ENCODE measurements at regions of chr2 and their contacts with region 1.

Region 1: DNA sequence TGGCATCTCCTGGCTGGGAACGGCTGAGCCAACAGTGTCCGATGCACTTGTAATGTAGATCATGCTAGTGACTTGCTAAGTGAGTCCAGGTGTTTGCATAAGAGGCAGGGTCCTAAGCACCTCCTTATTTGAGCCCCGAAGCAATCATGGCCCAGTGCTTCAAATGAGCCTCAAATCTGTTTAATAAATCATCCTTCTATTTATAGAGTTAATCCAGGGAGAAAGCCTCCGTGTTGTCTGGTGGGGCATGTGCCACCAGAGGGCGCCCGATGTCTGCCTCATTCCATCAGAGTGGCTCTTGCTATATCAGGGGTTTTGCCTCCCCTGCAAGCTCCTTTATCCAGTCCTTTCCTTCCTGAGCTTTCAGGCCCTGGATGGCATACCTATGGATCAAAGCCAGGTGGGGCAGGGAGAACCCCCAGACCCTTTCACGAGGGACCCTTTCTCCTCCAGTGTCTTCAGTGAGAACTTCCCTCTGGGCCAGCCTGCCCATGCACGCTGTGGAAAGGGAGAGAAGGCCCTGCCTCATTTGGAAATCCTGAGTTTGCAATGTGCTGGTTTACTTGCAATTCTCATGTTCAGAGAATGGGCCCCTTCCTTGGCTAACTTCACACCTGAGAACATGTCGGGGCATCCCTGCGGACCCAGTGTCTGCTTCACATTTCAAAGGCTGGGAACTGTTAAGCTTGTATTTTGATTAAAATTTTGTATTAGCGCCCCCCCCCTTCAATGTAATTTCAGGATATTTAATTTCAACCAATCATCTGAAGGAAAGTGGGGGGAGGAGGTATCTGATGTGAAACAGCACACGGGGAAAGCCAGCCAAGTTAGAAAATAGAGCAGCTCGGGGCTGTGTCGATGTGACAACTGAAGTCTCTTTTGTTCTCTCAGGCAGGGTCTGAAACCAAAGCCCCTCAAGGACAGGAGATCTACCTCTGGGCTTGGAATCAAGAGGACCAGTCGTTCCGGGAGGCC is 39.7 kb downstream of the RDH14 start:
- H3K4me3 ChIP-seq: no peak overlapping the region
- H3K27ac ChIP-seq: no peak overlapping the region
- H3K4me1 ChIP-seq: peaks cover 2% of the 10 kb centered on the region; the same call in 1 of the 2 replicates
- CTCF ChIP-seq: peak; percentile 80

Region 2: DNA sequence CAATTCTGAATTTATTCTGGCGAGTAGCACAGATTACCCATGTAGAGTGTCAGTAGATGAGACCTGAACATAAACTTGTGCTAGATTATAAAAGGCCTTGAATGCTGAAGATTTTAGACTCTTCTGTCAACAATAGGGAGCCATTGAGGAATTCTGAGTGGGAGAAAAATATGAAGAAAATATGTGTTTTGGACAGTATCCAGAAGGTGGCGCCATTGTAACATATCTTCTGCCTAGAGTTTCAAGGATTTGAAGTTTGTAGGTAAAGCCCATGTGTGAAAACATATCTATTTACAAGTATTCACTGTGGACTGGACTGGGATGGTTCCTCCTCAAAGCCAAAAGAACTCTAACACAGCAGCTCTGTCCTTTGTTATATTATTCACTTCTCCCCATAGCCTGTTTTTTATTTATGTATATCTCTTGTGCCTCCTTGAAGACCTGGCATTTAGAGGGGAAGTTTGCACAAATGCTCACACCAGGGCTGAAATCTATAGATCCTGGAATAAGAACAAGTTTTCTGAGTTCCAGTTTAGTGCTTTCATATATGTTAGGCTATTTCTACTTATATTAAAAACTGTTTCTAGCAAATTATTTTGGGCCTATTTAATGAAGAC is 85.2 kb before region 1 on chr2:
- CTCF ChIA-PET with region 1: interaction called, 19 read pairs
- POLR2A ChIA-PET with region 1: no interaction called
- H3K4me3 ChIP-seq: no peak overlapping the region
- H3K27ac ChIP-seq: no peak overlapping the region
- H3K4me1 ChIP-seq: no peaks in the 10 kb centered on the region
- CTCF ChIP-seq: peak; percentile 43; the same call in 1 of the 2 replicates

Region 3: DNA sequence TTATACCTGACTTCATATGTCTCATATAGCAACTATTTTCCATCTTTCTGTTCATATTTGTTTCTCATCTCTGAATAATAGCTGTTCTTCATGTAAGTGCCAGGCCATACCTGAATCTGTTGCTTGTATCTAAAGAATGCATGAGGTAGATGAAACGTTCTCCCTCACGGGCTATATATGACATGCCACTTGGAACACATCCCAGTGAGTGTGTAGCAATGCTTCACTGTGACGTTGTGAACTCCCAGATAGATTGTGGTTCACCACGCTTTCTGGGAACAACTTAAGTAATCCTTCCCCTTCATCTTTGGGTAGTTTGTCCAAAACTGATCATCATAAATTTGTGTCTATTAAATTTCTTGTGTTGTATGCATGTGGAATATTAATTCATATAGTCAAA is 20.4 kb before region 1 on chr2:
- CTCF ChIA-PET with region 1: interaction called, 16 read pairs
- POLR2A ChIA-PET with region 1: no interaction called
- H3K4me3 ChIP-seq: no peak overlapping the region
- H3K27ac ChIP-seq: no peak overlapping the region
- H3K4me1 ChIP-seq: no peaks in the 10 kb centered on the region
- CTCF ChIP-seq: no peak

Measured in HEK293 (cell line).